Activated CD4-positive, alpha-beta T cell treated with anti-CD3 and anti-CD28 coated beads, Interleukin-2, amount 10 ng/mL, durations not matched to agents 24 days and 14 days (primary cell): ENCODE measurements at regions of chr5 and their contacts with region 1.

Region 1: GRCh38 chr5:34915139-34915855 is at the starts of genes BRIX1 and RAD1:
- DNase-seq: peak; percentile 98
- H3K4me3 Mint-ChIP-seq: no peak within 1 kb of the TSS
- H3K27ac Mint-ChIP-seq: peak within 1 kb of the TSS; percentile 71
- H3K4me1 Mint-ChIP-seq: peaks cover 19% of the 10 kb centered on the region
- H3K27me3 Mint-ChIP-seq: no peaks in the 10 kb centered on the region
- total RNA-seq, gene BRIX1: 120 and 128 TPM in 2 replicates
- total RNA-seq, gene RAD1: 46.4 and 48.9 TPM in 2 replicates

Region 2: GRCh38 chr5:34007621-34008600 is 907.4 kb before region 1 on chr5 and contains the start of gene AMACR:
- intact Hi-C with region 1: loop called (anchors 5 kb)
- DNase-seq: peak; percentile 97
- H3K4me3 Mint-ChIP-seq: peak within 1 kb of the TSS; percentile 88
- H3K27ac Mint-ChIP-seq: peak within 1 kb of the TSS; percentile 91
- H3K4me1 Mint-ChIP-seq: peaks cover 27% of the 10 kb centered on the region
- H3K27me3 Mint-ChIP-seq: peaks cover 2% of the 10 kb centered on the region
- total RNA-seq, gene AMACR: 6.4 and 7.7 TPM in 2 replicates

Region 3: GRCh38 chr5:34838785-34839714 is 76.2 kb before region 1 on chr5 and contains the start of gene TTC23L:
- intact Hi-C with region 1: loop called (anchors 1 kb)
- DNase-seq: peak; percentile 97
- H3K4me3 Mint-ChIP-seq: peak within 1 kb of the TSS; percentile 89
- H3K27ac Mint-ChIP-seq: peak within 1 kb of the TSS; percentile 79
- H3K4me1 Mint-ChIP-seq: peaks cover 12% of the 10 kb centered on the region
- H3K27me3 Mint-ChIP-seq: peaks cover 10% of the 10 kb centered on the region
- total RNA-seq, gene TTC23L: not detected in 2 replicates

Region 4: DNA sequence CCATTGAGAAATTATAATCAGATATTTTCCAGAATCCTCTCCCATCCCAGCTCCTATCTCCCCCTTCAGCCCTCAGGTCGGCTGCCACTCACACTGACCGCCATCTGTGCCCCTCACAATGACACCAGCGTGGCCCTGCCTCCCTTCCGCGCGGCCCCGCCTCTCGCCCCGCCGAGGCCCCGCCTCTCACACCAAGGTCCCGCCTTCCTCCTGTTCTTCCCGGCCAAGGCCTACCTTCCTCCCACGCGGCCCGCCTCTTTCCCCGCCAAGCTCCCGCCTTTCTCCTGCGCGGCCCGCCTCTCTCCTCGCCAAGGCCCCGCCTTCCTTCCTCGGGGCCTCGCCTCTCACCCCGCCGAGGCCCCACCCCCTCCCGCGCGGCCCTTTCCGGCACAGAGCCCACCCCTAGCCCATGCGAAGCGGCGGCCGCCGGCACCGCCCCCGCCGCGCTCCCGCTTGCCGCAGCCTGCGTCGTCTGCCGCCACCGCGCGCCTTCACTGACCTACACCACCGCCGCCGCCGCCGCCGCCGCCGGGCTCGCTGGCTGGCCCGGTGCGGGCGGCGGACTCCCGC is 13.9 kb after region 1 on chr5 and contains the start of gene DNAJC21:
- intact Hi-C with region 1: loop called (anchors 1 kb)
- DNase-seq: peak; percentile 100
- H3K4me3 Mint-ChIP-seq: peak within 1 kb of the TSS; percentile 99
- H3K27ac Mint-ChIP-seq: peak within 1 kb of the TSS; percentile 97
- H3K4me1 Mint-ChIP-seq: peaks cover 35% of the 10 kb centered on the region
- H3K27me3 Mint-ChIP-seq: no peaks in the 10 kb centered on the region
- total RNA-seq, gene DNAJC21: 69.0 and 69.6 TPM in 2 replicates

Region 5: GRCh38 chr5:34957857-34958690 is 42.8 kb after region 1 on chr5:
- intact Hi-C with region 1: no loop called
- DNase-seq: no peak
- H3K4me3 Mint-ChIP-seq: no peak overlapping the region
- H3K27ac Mint-ChIP-seq: no peak overlapping the region
- H3K4me1 Mint-ChIP-seq: peaks cover 17% of the 10 kb centered on the region
- H3K27me3 Mint-ChIP-seq: no peaks in the 10 kb centered on the region

Region 6: DNA sequence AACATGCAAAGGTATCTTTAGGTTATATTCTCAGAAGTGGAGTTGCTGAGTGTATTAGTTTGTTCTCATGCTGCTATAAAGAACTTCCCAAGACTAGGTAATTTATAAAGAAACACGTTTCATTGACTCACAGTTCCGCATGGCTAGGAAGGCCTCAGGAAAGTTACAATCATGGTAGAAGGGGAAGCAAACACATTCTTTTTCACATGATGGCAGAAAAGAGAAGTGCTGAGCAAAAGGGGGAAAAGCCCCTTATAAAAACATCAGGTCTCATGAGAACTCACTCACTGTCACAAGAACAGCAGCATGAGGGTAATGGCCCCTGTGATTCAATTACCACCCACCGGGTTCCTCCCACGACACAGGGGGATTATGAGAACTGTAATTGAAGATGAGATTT is 478.6 kb after region 1 on chr5:
- intact Hi-C with region 1: no loop called
- DNase-seq: no peak
- H3K4me3 Mint-ChIP-seq: no peak overlapping the region
- H3K27ac Mint-ChIP-seq: no peak overlapping the region
- H3K4me1 Mint-ChIP-seq: no peaks in the 10 kb centered on the region
- H3K27me3 Mint-ChIP-seq: no peaks in the 10 kb centered on the region

Region 7: GRCh38 chr5:35617435-35618303 is 702.4 kb after region 1 on chr5 and contains the start of gene SPEF2:
- intact Hi-C with region 1: loop called (anchors 10 kb)
- DNase-seq: peak; percentile 93
- H3K4me3 Mint-ChIP-seq: peak within 1 kb of the TSS; percentile 87
- H3K27ac Mint-ChIP-seq: peak within 1 kb of the TSS; percentile 89
- H3K4me1 Mint-ChIP-seq: peaks cover 23% of the 10 kb centered on the region
- H3K27me3 Mint-ChIP-seq: no peaks in the 10 kb centered on the region
- total RNA-seq, gene SPEF2: 5.5 and 5.8 TPM in 2 replicates

Region 8: DNA sequence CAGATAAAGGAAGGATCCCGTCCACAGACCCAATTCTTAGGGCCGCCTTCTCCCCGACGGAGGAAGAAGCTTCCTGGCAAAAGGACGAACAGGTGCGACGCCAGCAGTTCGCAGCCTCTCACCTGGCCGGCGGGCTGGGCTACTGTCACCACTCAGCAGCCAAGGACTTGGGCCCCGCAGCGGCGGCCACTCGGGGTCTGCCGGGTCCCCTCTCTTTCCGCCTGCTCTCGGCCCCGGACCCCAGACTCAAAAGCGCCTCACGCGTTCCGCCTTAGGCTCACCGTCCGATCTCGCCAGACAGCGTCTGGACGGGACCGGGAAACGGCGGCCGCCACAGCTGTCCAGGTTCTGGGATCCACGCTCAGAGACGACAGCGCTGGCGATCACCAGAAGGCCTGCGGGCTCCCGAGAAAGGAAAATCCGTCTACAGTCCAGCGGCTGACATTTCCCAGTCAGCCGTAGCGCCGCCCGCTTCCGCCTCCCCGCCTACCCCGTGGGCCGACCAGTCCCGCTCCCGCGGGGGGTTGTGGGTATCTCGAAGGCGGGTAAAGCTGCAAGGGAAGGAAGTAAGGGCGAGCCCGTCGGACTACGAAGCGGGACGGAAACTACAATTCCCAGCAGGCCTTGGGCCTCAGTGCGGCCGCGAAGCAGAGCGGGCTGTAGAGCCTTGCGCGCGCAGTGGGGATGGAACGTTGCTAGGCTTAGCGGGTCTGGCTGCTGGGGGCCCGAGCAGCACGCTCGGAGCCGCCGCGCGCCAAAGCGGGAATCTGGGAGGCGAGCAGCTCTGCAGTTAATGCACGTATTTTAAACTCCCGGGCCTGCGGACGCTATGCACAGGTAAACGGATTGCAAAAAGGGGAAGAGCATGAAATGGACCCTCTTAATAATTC is 1236.4 kb after region 1 on chr5 and contains the starts of genes LMBRD2 and SKP2:
- intact Hi-C with region 1: loop called (anchors 5 kb)
- DNase-seq: peak; percentile 99
- H3K4me3 Mint-ChIP-seq: peak within 1 kb of the TSS; percentile 85
- H3K27ac Mint-ChIP-seq: peak within 1 kb of the TSS; percentile 90
- H3K4me1 Mint-ChIP-seq: peaks cover 36% of the 10 kb centered on the region
- H3K27me3 Mint-ChIP-seq: no peaks in the 10 kb centered on the region
- total RNA-seq, gene LMBRD2: 9.8 TPM in 2 replicates
- total RNA-seq, gene SKP2: 63.0 and 69.8 TPM in 2 replicates

Region 9: DNA sequence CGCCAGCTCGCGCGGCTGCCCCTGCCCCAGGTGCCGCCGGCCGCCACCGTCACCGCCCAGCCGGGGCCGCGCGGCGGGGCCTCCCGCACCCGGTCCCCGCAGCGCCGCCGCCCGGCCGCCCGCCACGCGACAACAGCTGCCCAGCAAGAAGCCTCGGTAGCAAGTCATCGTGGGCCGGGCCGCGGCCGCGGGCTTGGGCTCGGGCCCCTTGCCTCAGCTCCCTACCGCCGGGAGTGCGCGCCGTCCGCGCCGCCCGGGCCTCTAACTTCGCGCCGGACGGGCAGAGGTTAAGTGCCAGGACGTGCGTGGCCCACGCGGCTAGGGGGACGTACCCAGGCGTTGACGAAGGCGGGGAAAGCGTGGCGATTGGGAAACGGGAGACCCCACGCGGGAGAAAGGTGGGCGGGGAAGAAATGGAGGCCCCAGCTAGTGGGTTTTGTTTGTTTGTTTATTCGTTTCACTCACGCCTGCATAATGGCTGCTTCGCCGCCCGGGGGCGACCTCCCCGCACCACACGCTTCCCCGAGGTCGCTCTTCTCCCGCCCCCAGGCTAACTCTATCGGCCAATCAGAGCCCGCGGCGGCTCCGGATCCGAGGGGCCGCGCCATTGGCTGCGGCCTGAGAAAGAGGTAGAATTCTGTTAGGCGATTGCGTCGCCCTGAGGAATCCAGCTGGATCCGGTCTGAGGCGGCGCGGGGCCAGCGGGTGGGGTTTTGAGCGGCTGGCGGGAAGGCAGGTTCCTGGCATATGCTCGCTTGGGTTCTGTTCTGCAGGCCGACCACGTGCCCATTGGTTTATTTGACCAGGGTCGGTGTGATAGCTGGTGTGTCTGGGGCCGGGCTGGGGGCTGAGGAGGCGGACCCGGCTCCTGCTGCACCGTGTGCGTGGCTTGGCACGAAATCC is 1326.6 kb after region 1 on chr5 and contains the start of gene NADK2:
- intact Hi-C with region 1: loop called (anchors 5 kb)
- DNase-seq: peak; percentile 98
- H3K4me3 Mint-ChIP-seq: peak within 1 kb of the TSS; percentile 87
- H3K27ac Mint-ChIP-seq: peak within 1 kb of the TSS; percentile 94
- H3K4me1 Mint-ChIP-seq: peaks cover 28% of the 10 kb centered on the region
- H3K27me3 Mint-ChIP-seq: peaks cover 7% of the 10 kb centered on the region
- total RNA-seq, gene NADK2: 23.0 and 25.8 TPM in 2 replicates